Calu3 (cell line): ENCODE measurements at regions of chr17 and their contacts with region 1.

Region 1: GRCh38 chr17:67475236-67475937 is 98.3 kb downstream of the PITPNC1 start:
- DNase-seq: peak; percentile 80
- H3K4me3 Mint-ChIP-seq: no peak overlapping the region
- H3K27ac Mint-ChIP-seq: no peak overlapping the region
- H3K4me1 Mint-ChIP-seq: peaks cover 18% of the 10 kb centered on the region
- H3K27me3 Mint-ChIP-seq: no peaks in the 10 kb centered on the region
- CTCF ChIP-seq: peak; percentile 83

Region 2: GRCh38 chr17:67376737-67377487 is 98.5 kb before region 1 on chr17 and contains the start of gene PITPNC1:
- CTCF ChIA-PET with region 1: interaction called, 15 read pairs
- intact Hi-C with region 1: loop called (anchors 2 kb)
- DNase-seq: peak; percentile 79
- H3K4me3 Mint-ChIP-seq: peak within 1 kb of the TSS; percentile 76
- H3K27ac Mint-ChIP-seq: no peak within 1 kb of the TSS
- H3K4me1 Mint-ChIP-seq: peaks cover 19% of the 10 kb centered on the region
- H3K27me3 Mint-ChIP-seq: no peaks in the 10 kb centered on the region
- CTCF ChIP-seq: no peak
- total RNA-seq, gene PITPNC1: 6.9 and 11.4 TPM in 2 replicates

Region 3: DNA sequence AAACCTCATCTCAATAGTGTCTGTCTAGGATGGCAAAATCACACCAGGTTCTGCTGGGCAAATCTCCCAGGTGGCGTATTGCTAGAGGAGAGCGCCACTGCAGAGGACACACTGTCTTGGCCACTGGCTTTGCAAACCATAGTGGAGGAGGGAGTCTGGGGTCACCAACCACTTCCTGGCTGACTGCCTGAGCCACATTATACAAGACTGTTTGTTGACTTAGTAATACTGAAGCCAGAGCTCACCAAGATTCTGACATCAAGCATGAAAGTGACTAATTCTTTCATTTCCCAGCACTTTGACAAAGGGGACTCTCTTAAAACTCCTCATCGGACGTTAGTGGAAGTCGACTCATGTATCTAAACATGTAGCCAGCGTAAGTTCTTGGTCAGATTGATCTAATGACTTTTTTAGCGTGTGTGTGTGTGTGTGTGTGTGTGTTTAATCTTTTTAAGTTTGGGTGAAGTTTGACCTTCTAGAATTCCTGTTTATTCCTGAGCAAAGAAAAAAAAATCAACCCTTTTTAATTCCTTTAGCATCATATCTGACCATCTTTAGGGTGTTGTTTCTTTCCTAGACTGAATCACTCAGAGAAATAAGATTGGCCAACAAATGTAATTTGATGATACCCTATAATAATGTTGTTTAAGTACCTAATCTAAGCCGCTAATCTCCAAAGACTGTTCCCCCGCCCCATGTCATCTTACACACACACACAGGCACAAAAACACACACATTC is 84.6 kb before region 1 on chr17:
- CTCF ChIA-PET with region 1: interaction called, 10 read pairs
- intact Hi-C with region 1: loop called (anchors 1 kb)
- DNase-seq: peak; percentile 70
- H3K4me3 Mint-ChIP-seq: peak overlapping the region; percentile 33
- H3K27ac Mint-ChIP-seq: peak overlapping the region; percentile 34
- H3K4me1 Mint-ChIP-seq: peaks cover 20% of the 10 kb centered on the region
- H3K27me3 Mint-ChIP-seq: no peaks in the 10 kb centered on the region
- CTCF ChIP-seq: no peak

Region 4: GRCh38 chr17:67602956-67603355 is 127.6 kb after region 1 on chr17:
- CTCF ChIA-PET with region 1: no interaction called
- intact Hi-C with region 1: loop called (anchors 10 kb)
- DNase-seq: peak; percentile 57
- H3K4me3 Mint-ChIP-seq: no peak overlapping the region
- H3K27ac Mint-ChIP-seq: no peak overlapping the region
- H3K4me1 Mint-ChIP-seq: peaks cover 28% of the 10 kb centered on the region
- H3K27me3 Mint-ChIP-seq: no peaks in the 10 kb centered on the region
- CTCF ChIP-seq: peak; percentile 32